Naive thymus-derived CD4-positive, alpha-beta T cell (primary cell): ENCODE measurements at regions of chr5 and their contacts with region 1.

Region 1: GRCh38 chr5:109921735-109922380 is 232.1 kb downstream of the MAN2A1 start:
- DNase-seq: peak; percentile 13 to 90 (median 84)
- ATAC-seq: peak; percentile 92
- H3K4me3 ChIP-seq: peak overlapping the region; percentile 1
- H3K4me3 Mint-ChIP-seq: peak overlapping the region; percentile 75 to 91 (median 82)
- H3K27ac ChIP-seq: peak overlapping the region; percentile 78
- H3K27ac Mint-ChIP-seq: peak overlapping the region; percentile 89 to 100 (median 97)
- H3K4me1 ChIP-seq: peaks cover 34 to 45% of the 10 kb centered on the region in 2 donors
- H3K4me1 Mint-ChIP-seq: peaks cover 17 to 76% (median 62%) of the 10 kb centered on the region in 7 donors
- H3K27me3 ChIP-seq: no peaks in the 10 kb centered on the region
- H3K27me3 Mint-ChIP-seq: no peaks in the 10 kb centered on the region

Region 2: DNA sequence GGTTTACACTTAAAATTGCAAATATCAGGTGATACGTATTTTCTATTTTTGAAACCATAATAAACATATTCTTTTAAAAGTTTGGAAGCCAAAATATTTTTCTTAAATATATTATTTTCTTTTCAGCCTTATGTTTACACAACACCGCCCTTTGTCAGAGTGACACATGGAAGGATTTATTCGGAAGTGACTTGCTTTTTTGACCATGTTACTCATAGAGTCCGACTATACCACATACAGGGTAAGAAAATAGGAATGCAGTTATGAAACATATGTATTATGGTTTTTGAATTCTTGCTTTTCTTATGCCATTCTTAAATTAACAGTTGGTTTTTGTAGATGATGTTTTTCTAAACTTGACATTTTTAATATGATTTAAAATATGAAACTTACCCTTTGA is 98.3 kb before region 1 on chr5:
- CTCF ChIA-PET with region 1: interaction called, 3 read pairs
- POLR2A ChIA-PET with region 1: interaction called, 7 read pairs
- intact Hi-C with region 1: loop called in 1 of 2 experiments (anchors 5 kb)
- DNase-seq: no peak
- ATAC-seq: no peak
- H3K4me3 ChIP-seq: no peak overlapping the region
- H3K4me3 Mint-ChIP-seq: no peak overlapping the region
- H3K27ac ChIP-seq: no peak overlapping the region
- H3K27ac Mint-ChIP-seq: no peak overlapping the region
- H3K4me1 ChIP-seq: no peaks in the 10 kb centered on the region
- H3K4me1 Mint-ChIP-seq: peaks cover 0 to 19% (median 7%) of the 10 kb centered on the region in 7 donors
- H3K27me3 ChIP-seq: no peaks in the 10 kb centered on the region
- H3K27me3 Mint-ChIP-seq: no peaks in the 10 kb centered on the region

Region 3: GRCh38 chr5:109907731-109908130 is 14.1 kb before region 1 on chr5:
- CTCF ChIA-PET with region 1: interaction called, 3 read pairs
- POLR2A ChIA-PET with region 1: interaction called, 4 read pairs
- intact Hi-C with region 1: loop called in 1 of 2 experiments (anchors 2 kb)
- DNase-seq: no peak
- ATAC-seq: no peak
- H3K4me3 ChIP-seq: no peak overlapping the region
- H3K4me3 Mint-ChIP-seq: no peak overlapping the region
- H3K27ac ChIP-seq: no peak overlapping the region
- H3K27ac Mint-ChIP-seq: peak overlapping the region in 1 of 9 donors; percentile 31
- H3K4me1 ChIP-seq: no peaks in the 10 kb centered on the region
- H3K4me1 Mint-ChIP-seq: peaks cover 0 to 26% (median 15%) of the 10 kb centered on the region in 7 donors
- H3K27me3 ChIP-seq: no peaks in the 10 kb centered on the region
- H3K27me3 Mint-ChIP-seq: no peaks in the 10 kb centered on the region

Region 4: GRCh38 chr5:109971968-109972367 is 50.1 kb after region 1 on chr5:
- CTCF ChIA-PET with region 1: no interaction called
- POLR2A ChIA-PET with region 1: no interaction called
- intact Hi-C with region 1: loop called in 1 of 2 experiments (anchors 10 kb)
- DNase-seq: no peak
- ATAC-seq: no peak
- H3K4me3 ChIP-seq: no peak overlapping the region
- H3K4me3 Mint-ChIP-seq: no peak overlapping the region
- H3K27ac ChIP-seq: no peak overlapping the region
- H3K27ac Mint-ChIP-seq: no peak overlapping the region
- H3K4me1 ChIP-seq: no peaks in the 10 kb centered on the region
- H3K4me1 Mint-ChIP-seq: peaks cover 2 to 26% (median 20%) of the 10 kb centered on the region in 7 donors
- H3K27me3 ChIP-seq: no peaks in the 10 kb centered on the region
- H3K27me3 Mint-ChIP-seq: no peaks in the 10 kb centered on the region

Region 5: DNA sequence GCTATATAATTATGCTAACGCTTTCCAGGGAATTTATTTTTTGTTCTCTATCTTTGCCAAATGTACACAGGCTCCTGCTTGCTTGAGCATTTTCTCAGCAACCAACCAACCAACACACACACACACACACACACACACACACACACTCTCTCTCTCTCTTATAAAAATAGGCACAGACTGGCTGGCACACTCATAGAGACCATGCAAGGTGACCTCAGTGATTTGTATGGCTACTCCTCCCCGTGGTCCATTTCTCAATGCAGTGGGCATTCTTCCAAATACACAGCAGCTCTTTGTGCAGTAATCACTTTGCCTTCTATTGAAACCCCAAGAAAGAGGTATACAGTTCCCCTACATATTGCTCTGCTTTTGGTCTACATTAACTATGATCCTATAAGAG is 183.8 kb after region 1 on chr5:
- CTCF ChIA-PET with region 1: no interaction called
- POLR2A ChIA-PET with region 1: no interaction called
- intact Hi-C with region 1: loop called in 1 of 2 experiments (anchors 5 kb)
- DNase-seq: no peak
- ATAC-seq: no peak
- H3K4me3 ChIP-seq: no peak overlapping the region
- H3K4me3 Mint-ChIP-seq: peak overlapping the region in 4 of 10 donors; percentile 28 to 51 (median 49)
- H3K27ac ChIP-seq: no peak overlapping the region
- H3K27ac Mint-ChIP-seq: peak overlapping the region in 2 of 9 donors; percentile 12 to 48
- H3K4me1 ChIP-seq: peaks cover 7 to 23% of the 10 kb centered on the region in 2 donors
- H3K4me1 Mint-ChIP-seq: peaks cover 24 to 47% (median 42%) of the 10 kb centered on the region in 7 donors
- H3K27me3 ChIP-seq: no peaks in the 10 kb centered on the region
- H3K27me3 Mint-ChIP-seq: peaks cover 0 to 17% (median 0%) of the 10 kb centered on the region in 5 donors